PC-3 (cell line): ENCODE measurements at regions of chr5 and their contacts with region 1.

Region 1: DNA sequence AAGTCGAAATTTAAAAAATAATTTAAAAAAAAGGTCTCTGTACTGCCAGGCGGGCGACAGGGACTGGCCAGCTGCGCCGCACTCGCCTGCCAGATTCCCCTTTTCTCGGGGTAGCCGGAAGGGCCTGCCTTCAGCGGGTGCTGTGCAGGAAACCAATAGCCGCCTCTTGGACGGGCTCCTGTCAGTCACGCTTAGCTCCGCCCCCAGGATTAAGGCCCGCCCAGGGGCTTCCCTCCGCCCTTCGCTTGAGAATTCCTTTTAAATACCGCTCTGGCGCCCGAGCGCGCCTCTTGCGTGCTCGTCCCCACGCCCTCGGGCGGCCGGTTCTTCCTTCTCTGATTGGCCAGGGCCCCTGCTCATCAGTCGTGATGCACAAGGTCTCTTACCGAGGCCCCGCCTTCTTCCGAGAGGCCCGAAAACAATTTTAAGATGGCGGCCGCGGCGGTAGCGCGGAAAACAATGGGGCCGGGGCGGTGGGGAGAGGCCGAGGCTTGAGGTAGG is at the start of gene MAML1:
- DNase-seq: peak; percentile 99
- ATAC-seq: peak; percentile 90
- H3K4me3 ChIP-seq: peak within 1 kb of the TSS; percentile 85
- H3K27ac ChIP-seq: peak within 1 kb of the TSS; percentile 60
- H3K4me1 ChIP-seq: peaks cover 19% of the 10 kb centered on the region; the same call in 1 of the 2 replicates
- H3K27me3 ChIP-seq: no peaks in the 10 kb centered on the region
- CTCF ChIP-seq: no peak
- total RNA-seq, gene MAML1: 10.6 and 17.9 TPM in 2 replicates

Region 2: DNA sequence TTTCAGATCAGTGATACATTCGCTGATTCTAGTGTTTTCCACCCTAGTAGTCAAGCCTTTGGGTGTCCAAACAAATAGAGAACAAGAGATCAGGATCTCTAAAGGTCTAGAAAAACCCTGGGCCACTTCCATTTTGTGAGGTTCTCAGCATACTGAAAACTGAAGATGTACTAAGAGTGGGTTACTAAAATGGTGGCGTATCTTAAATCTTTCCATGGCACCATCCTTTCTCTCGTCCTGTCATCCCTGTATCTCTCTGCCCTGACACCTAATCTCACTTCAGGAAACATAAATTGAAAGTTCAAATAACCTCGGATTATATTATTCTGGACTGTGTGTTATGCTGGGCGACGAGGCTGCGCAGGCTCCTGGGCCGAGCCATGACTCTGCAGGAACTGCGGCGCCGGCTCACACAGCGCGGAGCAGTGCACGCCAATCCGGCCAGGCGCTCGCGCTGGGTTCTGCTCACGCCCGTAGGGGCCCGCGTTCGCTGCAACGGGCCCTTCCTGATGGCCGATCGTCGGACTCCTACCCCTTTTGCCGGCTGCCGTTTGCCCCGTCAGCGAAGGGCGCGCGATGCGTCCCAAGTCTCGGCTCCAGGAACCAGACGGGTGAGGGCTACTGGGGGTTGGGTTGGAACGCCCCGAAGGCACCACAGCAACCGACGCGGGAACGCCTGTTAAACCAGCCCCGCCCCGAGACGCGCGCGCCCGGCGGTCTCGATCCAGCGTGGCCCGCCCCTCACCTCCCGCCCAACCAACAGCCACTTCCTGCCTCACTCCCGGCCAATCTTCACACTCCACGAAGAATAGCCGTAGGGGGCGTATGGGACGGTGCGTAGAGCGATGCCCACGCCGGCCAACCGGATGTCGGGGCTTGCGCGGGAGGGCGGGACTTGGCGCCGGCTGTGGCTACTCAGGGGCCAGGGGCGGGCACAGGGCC is 34.2 kb before region 1 on chr5:
- CTCF ChIA-PET with region 1: no interaction called
- POLR2A ChIA-PET with region 1: no interaction called
- intact Hi-C with region 1: loop called (anchors 2 kb)
- DNase-seq: peak; percentile 97
- ATAC-seq: peak; percentile 89
- H3K4me3 ChIP-seq: peak overlapping the region; percentile 100
- H3K27ac ChIP-seq: peak overlapping the region; percentile 92
- H3K4me1 ChIP-seq: peaks cover 7% of the 10 kb centered on the region; the same call in 1 of the 2 replicates
- H3K27me3 ChIP-seq: no peaks in the 10 kb centered on the region
- CTCF ChIP-seq: no peak

Region 3: GRCh38 chr5:179763215-179763945 is 30.9 kb after region 1 on chr5:
- CTCF ChIA-PET with region 1: no interaction called
- POLR2A ChIA-PET with region 1: no interaction called
- intact Hi-C with region 1: loop called (anchors 2 kb)
- DNase-seq: peak; percentile 77
- ATAC-seq: peak; percentile 63
- H3K4me3 ChIP-seq: no peak overlapping the region
- H3K27ac ChIP-seq: no peak overlapping the region
- H3K4me1 ChIP-seq: peaks cover 42% of the 10 kb centered on the region
- H3K27me3 ChIP-seq: no peaks in the 10 kb centered on the region
- CTCF ChIP-seq: peak; percentile 84

Region 4: DNA sequence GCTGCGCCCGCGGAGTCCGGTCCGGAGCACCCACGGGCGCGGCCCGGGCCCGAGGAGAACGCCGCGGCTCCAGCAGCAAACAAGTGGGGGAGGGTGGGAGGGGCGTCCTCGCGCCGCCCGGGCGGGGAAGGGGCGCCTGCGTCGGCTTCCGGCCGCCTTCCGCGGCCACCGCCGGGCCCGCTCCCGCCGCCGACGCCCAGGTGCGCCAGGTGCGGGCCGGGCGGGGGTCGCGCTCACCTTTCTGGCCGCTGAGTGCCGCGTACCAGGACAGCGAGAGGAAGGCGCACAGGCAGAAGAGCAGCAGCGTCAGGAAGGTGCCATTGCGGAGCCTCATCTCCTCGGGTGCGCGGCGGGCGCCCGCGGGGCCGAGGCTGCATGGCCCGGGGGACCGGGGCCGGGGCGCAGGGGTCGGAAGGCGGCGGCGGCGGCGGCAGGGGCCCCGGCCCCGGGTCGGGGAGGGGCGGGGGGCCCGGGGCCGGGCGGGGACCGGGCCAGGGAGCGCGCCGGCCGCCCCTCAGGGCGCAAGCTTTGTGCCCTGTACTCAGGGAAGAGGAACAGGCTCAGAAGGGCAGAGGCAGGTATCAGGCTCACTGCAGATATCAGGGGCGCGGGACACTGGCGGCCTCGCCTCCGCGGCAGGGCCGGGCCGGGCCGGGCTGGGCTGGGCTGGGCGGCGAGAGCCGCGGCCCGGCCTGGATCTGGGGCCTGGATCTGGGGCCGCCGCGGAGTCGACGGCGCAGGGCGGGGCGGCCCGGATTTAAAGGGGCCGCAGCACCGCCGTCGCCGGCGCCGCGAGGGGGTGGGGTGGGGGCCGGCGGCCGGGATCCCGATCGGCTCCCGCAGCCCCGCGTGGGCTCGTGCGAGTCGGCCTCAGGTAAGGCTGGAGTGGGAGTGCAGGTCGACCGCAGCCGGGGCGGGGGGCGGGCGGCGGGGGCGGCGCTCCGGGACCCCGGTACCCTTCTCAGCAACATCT is 74.1 kb after region 1 on chr5 and contains the start of gene MGAT4B:
- CTCF ChIA-PET with region 1: no interaction called
- POLR2A ChIA-PET with region 1: no interaction called
- intact Hi-C with region 1: loop called (anchors 1 kb)
- DNase-seq: peak; percentile 74
- ATAC-seq: peak; percentile 74
- H3K4me3 ChIP-seq: peak within 1 kb of the TSS; percentile 86
- H3K27ac ChIP-seq: peak within 1 kb of the TSS; percentile 30; the same call in 1 of the 2 replicates
- H3K4me1 ChIP-seq: peaks cover 31% of the 10 kb centered on the region
- H3K27me3 ChIP-seq: no peaks in the 10 kb centered on the region
- CTCF ChIP-seq: no peak
- total RNA-seq, gene MGAT4B: 88.9 and 113 TPM in 2 replicates